Thyroid gland (tissue), 4 donors: ENCODE measurements at regions of chr7 and their contacts with region 1.

Region 1: DNA sequence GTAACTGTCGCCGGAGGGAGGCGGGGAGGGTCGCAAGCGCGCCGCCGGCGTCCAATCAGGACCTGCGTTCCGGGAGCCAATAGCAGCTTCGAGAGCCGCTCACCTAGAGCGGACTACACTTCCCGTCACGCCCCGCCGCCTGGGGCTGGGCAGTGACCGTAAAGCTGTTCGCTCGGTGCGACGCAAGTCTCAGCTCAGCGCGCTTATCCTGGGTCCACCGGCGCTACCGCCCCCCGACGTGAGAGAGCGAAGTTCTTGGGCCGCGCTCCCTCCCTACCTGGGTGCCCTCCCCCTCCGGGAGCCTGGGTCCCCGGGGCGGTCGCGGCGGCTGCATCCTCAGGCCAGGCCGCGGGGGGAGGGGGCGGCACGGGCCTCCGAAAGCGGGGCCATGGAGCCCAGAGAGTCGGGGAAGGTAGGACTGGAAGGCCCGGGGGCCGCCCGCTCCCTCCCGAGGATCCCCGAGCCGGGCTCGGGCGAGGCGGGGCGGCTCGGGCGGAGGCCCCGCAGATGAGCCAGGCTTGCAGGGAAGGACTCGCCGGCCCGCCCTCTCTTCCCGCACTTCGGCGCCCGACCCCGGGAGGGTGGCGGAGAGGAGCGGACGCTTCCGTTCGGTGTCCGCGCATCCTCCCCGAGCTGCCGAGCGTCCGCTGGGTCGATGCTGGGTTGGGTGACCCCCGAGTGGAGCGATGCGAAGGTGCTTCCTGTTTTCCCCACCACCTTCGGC is at the start of gene ZNF862:
- DNase-seq: peak; percentile 99
- H3K4me3 ChIP-seq: peak within 1 kb of the TSS; percentile 47 to 98 (median 95)
- H3K27ac ChIP-seq: peak within 1 kb of the TSS; percentile 84 to 91 (median 90)
- H3K4me1 ChIP-seq: peaks cover 7 to 10% of the 10 kb centered on the region in 2 donors
- H3K27me3 ChIP-seq: no peaks in the 10 kb centered on the region
- CTCF ChIP-seq: peak in 2 of 6 experiments; percentile 11 to 14
- POLR2A ChIP-seq: peak; percentile 43 to 87
- total RNA-seq, gene ZNF862: 23.6 to 53.7 (median 39.3) TPM

Region 2: GRCh38 chr7:149497456-149498261 is 340.7 kb before region 1 on chr7 and contains the start of gene ZNF746:
- intact Hi-C with region 1: no loop called
- DNase-seq: peak; percentile 76 to 81
- H3K4me3 ChIP-seq: peak within 1 kb of the TSS; percentile 6 to 65 (median 64)
- H3K27ac ChIP-seq: peak within 1 kb of the TSS; percentile 55 to 89 (median 81)
- H3K4me1 ChIP-seq: peaks cover 9 to 14% of the 10 kb centered on the region in 2 donors
- H3K27me3 ChIP-seq: no peaks in the 10 kb centered on the region
- CTCF ChIP-seq: peak in 3 of 6 experiments; percentile 76 to 91 (median 79)
- POLR2A ChIP-seq: peak in 1 of 2 donors; percentile 63
- total RNA-seq, gene ZNF746: 19.5 to 27.7 (median 24.0) TPM

Region 3: GRCh38 chr7:149771721-149772240 is 66.6 kb before region 1 on chr7:
- intact Hi-C with region 1: loop called (anchors 5 kb)
- DNase-seq: peak; percentile 91 to 92
- H3K4me3 ChIP-seq: peak overlapping the region in 1 of 3 donors; percentile 71
- H3K27ac ChIP-seq: peak overlapping the region in 2 of 3 donors; percentile 53 to 85
- H3K4me1 ChIP-seq: peaks cover 15 to 31% of the 10 kb centered on the region in 2 donors
- H3K27me3 ChIP-seq: no peaks in the 10 kb centered on the region
- CTCF ChIP-seq: no peak
- POLR2A ChIP-seq: peak in 1 of 2 donors; percentile 68

Region 4: GRCh38 chr7:149885191-149886017 is 47.0 kb after region 1 on chr7:
- intact Hi-C with region 1: no loop called
- DNase-seq: no peak
- H3K4me3 ChIP-seq: no peak overlapping the region
- H3K27ac ChIP-seq: no peak overlapping the region
- H3K4me1 ChIP-seq: peaks cover 12 to 19% of the 10 kb centered on the region in 2 donors
- H3K27me3 ChIP-seq: no peaks in the 10 kb centered on the region
- CTCF ChIP-seq: no peak
- POLR2A ChIP-seq: no peak